CD14-positive monocyte (primary cell): ENCODE measurements at regions of chr17 and their contacts with region 1.

Region 1: GRCh38 chr17:74646231-74646630 is 22.7 kb upstream of the CD300E start:
- DNase-seq: peak; percentile 66 to 85 (median 81)
- H3K4me3 ChIP-seq: no peak overlapping the region
- H3K4me3 Mint-ChIP-seq: peak overlapping the region in 1 of 2 donors; percentile 22
- H3K27ac ChIP-seq: no peak overlapping the region
- H3K27ac Mint-ChIP-seq: peak overlapping the region in 6 of 7 donors; percentile 23 to 91 (median 76)
- H3K4me1 ChIP-seq: peaks cover 43 to 51% of the 10 kb centered on the region in 2 donors
- H3K4me1 Mint-ChIP-seq: peaks cover 50% of the 10 kb centered on the region
- H3K27me3 ChIP-seq: no peaks in the 10 kb centered on the region
- H3K27me3 Mint-ChIP-seq: peaks cover 5 to 17% (median 10%) of the 10 kb centered on the region in 3 donors
- CTCF ChIP-seq: peak; percentile 73

Region 2: GRCh38 chr17:74566132-74566753 is 80.0 kb before region 1 on chr17:
- intact Hi-C with region 1: loop called (anchors 2 to 5 kb)
- DNase-seq: peak in 2 of 3 donors; percentile 58 to 59
- H3K4me3 ChIP-seq: peak overlapping the region in 2 of 3 experiments; percentile 37 to 79
- H3K4me3 Mint-ChIP-seq: peak overlapping the region; percentile 73 to 91
- H3K27ac ChIP-seq: peak overlapping the region; percentile 26 to 82
- H3K27ac Mint-ChIP-seq: peak overlapping the region; percentile 14 to 95 (median 86)
- H3K4me1 ChIP-seq: peaks cover 75 to 87% of the 10 kb centered on the region in 2 donors
- H3K4me1 Mint-ChIP-seq: peaks cover 64% of the 10 kb centered on the region
- H3K27me3 ChIP-seq: no peaks in the 10 kb centered on the region
- H3K27me3 Mint-ChIP-seq: peaks cover 3 to 9% (median 4%) of the 10 kb centered on the region in 3 donors
- CTCF ChIP-seq: peak; percentile 82

Region 3: DNA sequence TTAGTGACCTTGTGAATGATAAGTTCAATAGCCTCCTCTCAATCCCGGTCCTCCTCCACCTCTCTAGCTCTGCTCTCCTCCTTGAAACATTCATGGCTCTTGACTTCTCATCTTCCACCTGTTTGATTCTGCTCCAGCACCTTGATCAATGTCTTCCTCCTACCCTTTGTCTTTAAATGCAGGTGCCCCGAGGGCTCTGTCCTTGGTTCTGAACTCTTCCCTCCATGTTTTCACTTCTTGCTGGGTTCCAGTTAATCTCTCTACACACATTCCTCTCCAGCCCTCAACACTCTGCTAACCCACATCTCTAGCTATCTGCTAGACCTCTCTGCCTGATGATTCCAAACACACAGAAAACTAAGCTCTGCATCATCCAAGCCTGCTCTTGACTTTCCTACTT is 36.1 kb before region 1 on chr17:
- intact Hi-C with region 1: loop called in 1 of 2 experiments (anchors 5 kb)
- DNase-seq: no peak
- H3K4me3 ChIP-seq: no peak overlapping the region
- H3K4me3 Mint-ChIP-seq: no peak overlapping the region
- H3K27ac ChIP-seq: no peak overlapping the region
- H3K27ac Mint-ChIP-seq: no peak overlapping the region
- H3K4me1 ChIP-seq: peaks cover 64 to 77% of the 10 kb centered on the region in 2 donors
- H3K4me1 Mint-ChIP-seq: peaks cover 67% of the 10 kb centered on the region
- H3K27me3 ChIP-seq: no peaks in the 10 kb centered on the region
- H3K27me3 Mint-ChIP-seq: peaks cover under 1 to 7% (median 1%) of the 10 kb centered on the region in 3 donors
- CTCF ChIP-seq: no peak

Region 4: DNA sequence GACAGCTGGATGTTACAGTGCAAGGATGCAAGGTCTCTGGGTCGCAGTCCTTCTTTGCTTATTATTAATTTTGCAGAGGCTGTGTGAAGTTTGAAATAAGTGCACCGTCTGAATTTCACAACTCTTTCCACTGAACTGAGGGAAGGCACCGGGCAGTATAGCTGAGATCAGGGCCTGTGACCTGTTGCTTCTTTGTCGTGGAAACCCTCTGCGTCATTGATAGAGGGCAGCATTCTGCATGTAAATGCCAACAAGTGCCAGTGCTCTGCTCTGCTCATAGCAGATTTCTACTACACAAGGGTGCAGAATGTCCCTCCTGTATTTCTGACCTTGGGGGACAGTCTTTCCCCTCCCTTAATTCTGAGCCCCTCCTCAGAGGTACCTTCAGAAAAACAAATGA is 40.5 kb after region 1 on chr17:
- intact Hi-C with region 1: no loop called
- DNase-seq: peak; percentile 66 to 75 (median 72)
- H3K4me3 ChIP-seq: no peak overlapping the region
- H3K4me3 Mint-ChIP-seq: no peak overlapping the region
- H3K27ac ChIP-seq: no peak overlapping the region
- H3K27ac Mint-ChIP-seq: peak overlapping the region in 6 of 7 donors; percentile 45 to 95 (median 62)
- H3K4me1 ChIP-seq: peaks cover 77 to 88% of the 10 kb centered on the region in 2 donors
- H3K4me1 Mint-ChIP-seq: peaks cover 85% of the 10 kb centered on the region
- H3K27me3 ChIP-seq: no peaks in the 10 kb centered on the region
- H3K27me3 Mint-ChIP-seq: peaks cover 0 to 5% (median 4%) of the 10 kb centered on the region in 3 donors
- CTCF ChIP-seq: peak; percentile 29

Region 5: DNA sequence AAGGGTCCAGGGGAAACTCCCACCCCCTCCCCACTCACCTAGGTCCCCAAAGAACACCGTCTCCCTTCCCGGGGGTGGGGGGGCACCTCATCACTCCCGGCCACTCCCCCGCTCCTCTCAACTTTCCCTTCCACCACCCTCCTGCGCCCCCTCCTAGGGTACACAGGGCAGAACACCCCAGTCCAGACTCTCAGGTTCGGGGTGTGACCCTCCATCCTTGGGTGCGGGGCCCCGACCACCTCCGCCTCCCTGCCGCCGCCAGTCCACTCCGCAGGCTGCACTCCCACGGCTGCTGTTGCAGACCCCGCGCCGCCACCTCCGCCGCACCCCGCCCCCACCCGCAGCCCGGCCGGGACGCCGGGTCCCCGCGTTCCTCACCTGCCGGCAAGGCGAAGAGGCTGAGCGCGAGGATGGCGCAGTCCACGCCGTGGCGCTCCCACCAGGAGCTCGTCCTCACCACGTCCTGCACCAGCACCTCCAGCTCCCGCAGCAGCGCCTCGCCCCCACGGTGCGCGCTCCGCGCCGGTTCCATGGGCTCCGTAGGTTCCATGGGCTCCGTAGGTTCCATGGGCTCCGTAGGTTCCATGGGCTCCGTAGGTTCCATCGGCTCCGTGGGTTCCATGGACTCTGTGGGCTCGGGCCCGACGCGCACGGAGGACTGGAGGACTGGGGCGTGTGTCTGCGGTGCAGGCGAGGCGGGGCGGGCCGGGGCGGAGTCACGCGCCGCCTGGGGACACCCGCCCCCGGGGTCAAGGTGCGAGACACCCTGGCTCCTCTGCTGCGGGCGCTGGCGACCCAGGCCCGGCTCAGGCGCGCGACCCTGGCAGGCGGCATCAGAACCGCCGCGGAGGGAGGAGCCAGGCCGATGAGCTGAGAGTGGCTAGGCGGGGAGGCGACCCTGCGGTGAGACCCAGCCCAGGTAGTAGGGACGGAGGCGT is 247.0 kb after region 1 on chr17 and contains the start of gene FADS6:
- intact Hi-C with region 1: no loop called
- DNase-seq: no peak
- H3K4me3 ChIP-seq: no peak within 1 kb of the TSS
- H3K4me3 Mint-ChIP-seq: peak within 1 kb of the TSS; percentile 34 to 86
- H3K27ac ChIP-seq: no peak within 1 kb of the TSS
- H3K27ac Mint-ChIP-seq: peak within 1 kb of the TSS in 1 of 7 donors; percentile 35
- H3K4me1 ChIP-seq: peaks cover 0 to 12% of the 10 kb centered on the region in 2 donors
- H3K4me1 Mint-ChIP-seq: peaks cover 5% of the 10 kb centered on the region
- H3K27me3 ChIP-seq: peaks cover 26 to 53% of the 10 kb centered on the region in 2 donors
- H3K27me3 Mint-ChIP-seq: peaks cover 60 to 68% (median 66%) of the 10 kb centered on the region in 3 donors
- CTCF ChIP-seq: no peak
- polyA plus RNA-seq, gene FADS6: not detected